GM12878 (cell line): ENCODE measurements at regions of chr1 and their contacts with region 1.

Region 1: DNA sequence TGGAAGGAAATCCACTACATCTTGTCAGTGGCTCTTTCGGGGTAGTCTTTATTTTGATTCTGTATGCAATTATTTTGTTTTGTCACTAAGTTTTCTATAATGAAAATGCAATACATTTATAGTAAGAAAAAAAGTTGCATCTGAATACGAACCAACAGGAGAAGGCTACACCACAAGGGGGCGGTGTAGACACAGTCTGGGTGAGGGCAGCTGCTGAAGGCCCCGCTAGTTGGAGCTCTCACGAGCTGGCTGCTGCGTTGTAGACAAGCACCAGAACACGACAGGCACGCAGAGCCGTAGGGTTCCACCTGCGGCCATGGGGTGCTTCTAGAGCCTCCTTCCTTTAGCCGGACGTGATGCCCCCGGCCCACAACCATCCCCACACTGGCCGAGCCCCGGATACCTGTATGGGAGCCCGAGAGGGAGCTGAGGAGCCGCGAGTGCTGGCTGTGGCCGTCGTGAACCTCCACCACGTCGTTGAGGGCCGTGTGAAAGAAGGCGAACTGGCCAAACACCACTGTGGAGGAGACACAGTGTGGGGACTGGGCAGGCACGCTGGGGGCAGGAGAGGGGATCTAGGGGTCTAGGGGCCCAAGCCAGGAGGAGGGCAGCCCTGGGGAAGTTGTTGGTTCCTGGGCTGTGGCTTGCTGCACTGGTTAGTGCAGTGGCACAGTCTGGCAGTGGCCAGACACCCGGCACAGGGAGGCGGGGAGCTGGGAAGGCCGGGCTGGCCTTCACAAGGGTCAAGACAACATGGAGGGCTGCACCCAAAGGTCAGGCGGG is 160.8 kb downstream of the ZSCAN20 start:
- DNase-seq: peak; percentile 24
- ATAC-seq: peak; percentile 97
- H3K4me3 ChIP-seq: no peak overlapping the region
- H3K27ac ChIP-seq: no peak overlapping the region
- H3K4me1 ChIP-seq: no peaks in the 10 kb centered on the region
- H3K27me3 ChIP-seq: peaks cover 0 to 4% of the 10 kb centered on the region in 2 experiments; a peak in 2 of 4 replicates
- CTCF ChIP-seq: peak; percentile 99; a peak in 5 of 6 replicates
- EP300 ChIP-seq: no peak
- POLR2A ChIP-seq: no peak
- RAD21 ChIP-seq: peak; percentile 64

Region 2: GRCh38 chr1:33616773-33617172 is 16.4 kb before region 1 on chr1:
- CTCF ChIA-PET with region 1: interaction called, 20 read pairs
- POLR2A ChIA-PET with region 1: no interaction called
- RAD21 ChIA-PET with region 1: no interaction called
- SMC1A ChIA-PET with region 1: no interaction called
- in situ Hi-C with region 1: no loop called
- intact Hi-C with region 1: no loop called
- DNase-seq: no peak
- ATAC-seq: no peak
- H3K4me3 ChIP-seq: no peak overlapping the region
- H3K27ac ChIP-seq: no peak overlapping the region
- H3K4me1 ChIP-seq: no peaks in the 10 kb centered on the region
- H3K27me3 ChIP-seq: peaks cover 2 to 3% of the 10 kb centered on the region in 2 experiments; a peak in 3 of 4 replicates
- CTCF ChIP-seq: no peak
- EP300 ChIP-seq: no peak
- POLR2A ChIP-seq: no peak
- RAD21 ChIP-seq: no peak

Region 3: GRCh38 chr1:34013958-34014737 is 380.9 kb after region 1 on chr1:
- CTCF ChIA-PET with region 1: interaction called, 15 read pairs
- POLR2A ChIA-PET with region 1: no interaction called
- RAD21 ChIA-PET with region 1: interaction called, 5 read pairs
- SMC1A ChIA-PET with region 1: interaction called, 3 read pairs
- in situ Hi-C with region 1: no loop called
- intact Hi-C with region 1: loop called (anchors 10 kb)
- DNase-seq: no peak
- ATAC-seq: peak; percentile 60
- H3K4me3 ChIP-seq: no peak overlapping the region
- H3K27ac ChIP-seq: no peak overlapping the region
- H3K4me1 ChIP-seq: no peaks in the 10 kb centered on the region
- H3K27me3 ChIP-seq: no peaks in the 10 kb centered on the region; a peak in 1 of 4 replicates
- CTCF ChIP-seq: peak; percentile 50 to 64 (median 61)
- EP300 ChIP-seq: no peak
- POLR2A ChIP-seq: no peak
- RAD21 ChIP-seq: 0 out of 2 replicates have a peak, but pooled peaks have one; percentile 22

Region 4: GRCh38 chr1:34162852-34163766 is 529.9 kb after region 1 on chr1:
- CTCF ChIA-PET with region 1: interaction called, 17 read pairs
- POLR2A ChIA-PET with region 1: no interaction called
- RAD21 ChIA-PET with region 1: interaction called, 8 read pairs
- SMC1A ChIA-PET with region 1: no interaction called
- in situ Hi-C with region 1: loop called (anchors 10 kb)
- intact Hi-C with region 1: loop called (anchors 2 kb)
- DNase-seq: no peak
- ATAC-seq: peak; percentile 98
- H3K4me3 ChIP-seq: peak overlapping the region; percentile 41; the same call in 1 of the 2 replicates
- H3K27ac ChIP-seq: no peak overlapping the region
- H3K4me1 ChIP-seq: no peaks in the 10 kb centered on the region
- H3K27me3 ChIP-seq: peaks cover 4 to 23% of the 10 kb centered on the region in 2 experiments
- CTCF ChIP-seq: peak; percentile 62 to 68 (median 66)
- EP300 ChIP-seq: no peak
- POLR2A ChIP-seq: no peak
- RAD21 ChIP-seq: peak; percentile 56

Region 5: GRCh38 chr1:34603594-34603993 is 970.4 kb after region 1 on chr1:
- CTCF ChIA-PET with region 1: interaction called, 18 read pairs
- POLR2A ChIA-PET with region 1: no interaction called
- RAD21 ChIA-PET with region 1: no interaction called
- SMC1A ChIA-PET with region 1: no interaction called
- in situ Hi-C with region 1: loop called (anchors 10 kb)
- intact Hi-C with region 1: loop called (anchors 2 kb)
- DNase-seq: no peak
- ATAC-seq: no peak
- H3K4me3 ChIP-seq: no peak overlapping the region
- H3K27ac ChIP-seq: no peak overlapping the region
- H3K4me1 ChIP-seq: no peaks in the 10 kb centered on the region
- H3K27me3 ChIP-seq: no peaks in the 10 kb centered on the region
- CTCF ChIP-seq: no peak
- EP300 ChIP-seq: no peak
- POLR2A ChIP-seq: no peak
- RAD21 ChIP-seq: no peak

Region 6: DNA sequence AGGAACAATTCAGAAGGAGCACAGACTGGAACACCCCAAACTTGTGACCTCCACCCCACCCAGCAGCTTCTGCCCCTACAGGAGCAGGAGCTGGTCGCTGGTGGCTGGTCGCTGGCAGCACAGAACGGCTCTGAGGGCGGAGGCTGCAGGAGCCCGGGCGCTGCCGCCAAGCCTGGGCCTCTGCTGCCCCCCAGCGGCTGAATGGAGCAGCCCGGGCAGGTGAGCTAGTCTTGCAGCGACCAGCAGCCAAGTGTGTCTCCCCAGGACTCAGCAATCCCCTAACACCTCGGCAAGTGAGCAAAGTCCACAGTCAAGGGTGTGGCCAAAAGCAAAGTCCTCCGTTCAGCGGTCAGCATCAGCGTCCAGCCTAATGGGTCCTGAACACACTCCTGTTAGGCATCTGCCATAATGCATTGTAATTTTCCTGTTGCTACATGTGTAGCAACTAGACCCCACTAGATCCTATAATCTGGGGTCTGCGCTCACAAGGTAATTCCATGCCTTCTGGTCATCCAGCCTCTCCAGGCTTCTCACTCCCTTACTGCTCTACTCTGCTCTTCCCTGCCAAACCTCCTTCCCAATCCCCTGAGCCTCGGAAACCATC is 1109.6 kb after region 1 on chr1:
- CTCF ChIA-PET with region 1: interaction called, 37 read pairs
- POLR2A ChIA-PET with region 1: no interaction called
- RAD21 ChIA-PET with region 1: interaction called, 18 read pairs
- SMC1A ChIA-PET with region 1: interaction called, 12 read pairs
- in situ Hi-C with region 1: loop called (anchors 10 kb)
- intact Hi-C with region 1: loop called (anchors 1 kb)
- DNase-seq: peak; percentile 2
- ATAC-seq: peak; percentile 100
- H3K4me3 ChIP-seq: no peak overlapping the region
- H3K27ac ChIP-seq: no peak overlapping the region
- H3K4me1 ChIP-seq: no peaks in the 10 kb centered on the region
- H3K27me3 ChIP-seq: no peaks in the 10 kb centered on the region; a peak in 1 of 4 replicates
- CTCF ChIP-seq: peak; percentile 94 to 99 (median 94)
- EP300 ChIP-seq: no peak
- POLR2A ChIP-seq: no peak
- RAD21 ChIP-seq: peak; percentile 74